AG04449 (cell line): ENCODE measurements at regions of chr9 and their contacts with region 1.

Region 1: GRCh38 chr9:19464764-19465585 is 56.2 kb downstream of the ACER2 start:
- DNase-seq: no peak
- H3K4me3 ChIP-seq: peak overlapping the region; percentile 50
- CTCF ChIP-seq: peak; percentile 84

Region 2: DNA sequence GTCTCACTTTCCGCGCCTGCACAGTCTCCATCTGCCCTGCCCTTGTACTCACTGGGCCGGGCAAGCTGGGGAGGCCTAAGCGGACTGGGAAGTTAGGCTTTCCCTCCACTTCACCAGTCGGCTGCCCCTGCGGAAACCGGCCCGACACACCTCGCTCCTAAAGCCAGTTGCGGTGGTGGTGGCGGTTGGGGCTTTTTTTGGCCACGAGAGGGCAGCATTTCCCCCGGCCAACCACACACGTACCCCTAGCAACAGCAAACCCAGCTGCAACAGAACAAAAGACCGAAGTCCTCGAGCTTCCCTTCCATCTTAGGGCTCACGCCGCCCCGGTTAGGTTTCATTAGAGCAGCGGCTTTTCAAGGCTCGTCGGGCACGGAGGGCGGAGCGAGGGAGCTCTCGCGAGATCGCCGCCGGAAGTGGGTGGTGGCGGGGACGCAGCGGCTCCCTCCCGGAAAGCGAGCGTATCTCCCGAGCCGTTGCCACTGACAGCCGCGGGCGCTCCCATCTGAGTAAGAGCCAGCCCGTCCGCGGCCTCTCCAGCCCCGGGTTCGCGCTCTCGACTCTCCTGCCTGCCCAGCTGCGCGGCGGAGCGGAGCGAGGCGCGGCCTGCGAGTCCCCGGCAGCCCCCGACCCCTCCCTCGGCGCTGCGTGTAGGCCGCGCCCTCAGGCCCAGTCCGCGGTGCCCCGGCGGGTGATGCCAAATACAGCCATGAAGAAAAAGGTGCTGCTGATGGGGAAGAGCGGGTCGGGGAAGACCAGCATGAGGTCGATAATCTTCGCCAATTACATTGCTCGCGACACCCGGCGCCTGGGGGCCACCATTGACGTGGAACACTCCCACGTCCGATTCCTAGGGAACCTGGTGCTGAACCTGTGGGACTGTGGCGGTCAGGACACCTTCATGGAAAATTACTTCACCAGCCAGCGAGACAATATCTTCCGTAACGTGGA is 415.7 kb before region 1 on chr9 and contains the start of gene RRAGA:
- CTCF ChIA-PET with region 1: interaction called, 10 read pairs
- POLR2A ChIA-PET with region 1: no interaction called
- DNase-seq: peak; percentile 85
- H3K4me3 ChIP-seq: peak within 1 kb of the TSS; percentile 69
- CTCF ChIP-seq: peak; percentile 84

Region 3: GRCh38 chr9:19441730-19442129 is 23.2 kb before region 1 on chr9:
- CTCF ChIA-PET with region 1: interaction called, 25 read pairs
- POLR2A ChIA-PET with region 1: interaction called, 4 read pairs
- DNase-seq: no peak
- H3K4me3 ChIP-seq: no peak overlapping the region
- CTCF ChIP-seq: no peak

Region 4: GRCh38 chr9:19481971-19482404 is 17.0 kb after region 1 on chr9:
- CTCF ChIA-PET with region 1: interaction called, 20 read pairs
- POLR2A ChIA-PET with region 1: no interaction called
- DNase-seq: no peak
- H3K4me3 ChIP-seq: no peak overlapping the region
- CTCF ChIP-seq: no peak

Region 5: GRCh38 chr9:19493174-19493811 is 28.3 kb after region 1 on chr9:
- CTCF ChIA-PET with region 1: interaction called, 19 read pairs
- POLR2A ChIA-PET with region 1: no interaction called
- DNase-seq: no peak
- H3K4me3 ChIP-seq: peak overlapping the region; percentile 46
- CTCF ChIP-seq: peak; percentile 70

Region 6: GRCh38 chr9:19587678-19588077 is 122.7 kb after region 1 on chr9:
- CTCF ChIA-PET with region 1: no interaction called
- POLR2A ChIA-PET with region 1: no interaction called
- DNase-seq: no peak
- H3K4me3 ChIP-seq: no peak overlapping the region
- CTCF ChIP-seq: no peak

Region 7: GRCh38 chr9:19925817-19926503 is 461.0 kb after region 1 on chr9:
- CTCF ChIA-PET with region 1: interaction called, 27 read pairs
- POLR2A ChIA-PET with region 1: no interaction called
- DNase-seq: peak; percentile 4
- H3K4me3 ChIP-seq: peak overlapping the region; percentile 61
- CTCF ChIP-seq: peak; percentile 98